ENCODE measurements at regions of chr6 and their contacts with region 1.

Region 1: DNA sequence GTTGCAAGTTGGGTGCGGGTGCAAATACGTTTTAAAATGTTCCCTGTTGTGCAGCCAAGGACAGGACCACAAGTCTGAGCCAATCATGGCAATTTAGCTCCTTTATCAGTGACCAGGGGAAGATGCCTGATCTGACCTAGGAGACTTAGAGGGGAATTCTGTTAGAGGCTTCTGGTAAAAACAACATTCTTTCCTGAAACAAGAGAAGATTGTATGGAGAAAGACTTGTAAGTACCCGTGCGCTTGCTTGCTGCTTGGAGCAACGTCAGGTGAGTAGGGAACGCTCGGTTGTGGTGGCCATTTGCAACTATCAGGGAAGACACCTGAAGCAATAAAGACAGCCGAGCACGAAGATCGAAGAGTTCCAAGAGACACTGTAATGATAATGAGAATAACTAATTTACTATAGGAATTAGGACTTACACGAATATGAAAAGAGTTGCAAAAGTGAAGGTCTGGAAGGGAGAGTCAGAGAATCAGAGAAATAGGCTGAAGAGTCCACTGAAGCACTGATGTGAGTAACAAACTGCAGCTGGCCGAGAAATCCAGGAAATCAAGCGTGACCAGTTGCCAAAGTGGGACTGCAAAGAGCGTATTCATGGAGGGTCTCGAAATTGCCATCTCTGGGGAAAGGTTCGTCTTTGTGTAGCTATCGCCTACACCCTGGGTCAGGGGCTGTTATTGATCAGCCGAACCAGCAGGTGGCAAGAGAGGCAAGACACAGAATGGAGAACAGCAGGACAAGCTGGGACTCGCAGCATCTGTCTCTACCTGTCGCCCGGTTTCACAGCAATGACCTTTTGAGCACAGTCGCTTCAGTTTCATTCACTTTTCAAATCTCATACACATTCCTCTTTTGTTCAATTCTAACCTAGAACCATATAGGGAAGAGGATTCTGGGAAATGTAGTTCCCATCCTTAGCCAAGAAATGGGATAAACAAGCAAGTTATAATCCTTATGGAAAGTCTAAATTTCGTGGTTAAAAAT is 26.1 kb downstream of the LOC128125822 start:
- DNase-seq: peak; percentile 84
- ATAC-seq: peak; percentile 100
- H3K4me3 Mint-ChIP-seq: peak overlapping the region; percentile 73
- H3K27ac Mint-ChIP-seq: peak overlapping the region; percentile 2
- H3K4me1 Mint-ChIP-seq: peaks cover 16% of the 10 kb centered on the region
- H3K27me3 Mint-ChIP-seq: peaks cover 6% of the 10 kb centered on the region

Region 2: DNA sequence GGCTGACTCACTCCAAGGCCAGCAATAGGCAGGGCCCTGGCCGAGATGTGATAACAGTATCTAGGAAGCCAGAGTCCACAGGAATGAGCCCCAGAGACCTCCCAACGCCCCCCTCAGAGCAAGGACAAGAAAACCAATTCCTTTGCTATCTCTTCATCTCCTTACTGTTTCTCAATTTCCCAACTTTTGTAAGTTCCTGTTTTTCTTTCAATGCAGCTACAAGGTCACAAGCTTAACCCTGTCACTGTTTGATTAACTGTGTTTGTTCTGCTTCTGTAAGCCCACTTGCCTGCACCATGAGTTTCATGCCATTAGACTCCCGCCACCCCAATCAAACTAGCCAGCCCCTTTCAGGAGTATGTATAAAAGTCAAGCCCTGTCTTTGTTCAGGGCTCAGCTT is 383.5 kb before region 1 on chr6:
- CTCF ChIA-PET with region 1: no interaction called
- POLR2A ChIA-PET with region 1: no interaction called
- intact Hi-C with region 1: no loop called
- DNase-seq: no peak
- ATAC-seq: no peak
- H3K4me3 Mint-ChIP-seq: no peak overlapping the region
- H3K27ac Mint-ChIP-seq: no peak overlapping the region
- H3K4me1 Mint-ChIP-seq: no peaks in the 10 kb centered on the region
- H3K27me3 Mint-ChIP-seq: no peaks in the 10 kb centered on the region

Region 3: GRCh38 chr6:63352587-63353285 is 245.6 kb before region 1 on chr6:
- CTCF ChIA-PET with region 1: no interaction called
- POLR2A ChIA-PET with region 1: no interaction called
- intact Hi-C with region 1: loop called in 1 of 2 experiments (anchors 1 kb)
- DNase-seq: no peak
- ATAC-seq: no peak
- H3K4me3 Mint-ChIP-seq: no peak overlapping the region
- H3K27ac Mint-ChIP-seq: no peak overlapping the region
- H3K4me1 Mint-ChIP-seq: peaks cover 6% of the 10 kb centered on the region
- H3K27me3 Mint-ChIP-seq: peaks cover 13% of the 10 kb centered on the region

Region 4: DNA sequence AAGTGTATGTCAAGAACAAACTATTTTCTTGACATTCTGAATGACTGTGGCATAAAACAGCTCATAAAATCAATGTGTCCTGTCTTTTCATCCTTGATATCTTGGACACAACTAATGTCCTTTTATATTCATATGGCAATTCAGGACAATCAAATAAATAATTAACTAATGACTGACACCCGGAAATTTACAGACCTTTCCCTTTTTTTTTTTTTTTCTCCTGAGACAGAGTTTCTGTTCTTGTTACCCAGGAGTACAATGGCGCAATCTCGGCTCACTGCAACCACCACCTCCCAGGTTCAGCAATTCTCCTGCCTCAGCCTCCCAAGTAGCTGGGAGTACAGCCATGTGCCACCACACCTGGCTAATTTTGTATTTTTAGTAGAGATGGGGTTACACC is 171.5 kb before region 1 on chr6:
- CTCF ChIA-PET with region 1: no interaction called
- POLR2A ChIA-PET with region 1: no interaction called
- intact Hi-C with region 1: no loop called
- DNase-seq: no peak
- ATAC-seq: no peak
- H3K4me3 Mint-ChIP-seq: no peak overlapping the region
- H3K27ac Mint-ChIP-seq: no peak overlapping the region
- H3K4me1 Mint-ChIP-seq: no peaks in the 10 kb centered on the region
- H3K27me3 Mint-ChIP-seq: peaks cover 7% of the 10 kb centered on the region

Region 5: GRCh38 chr6:63635588-63636517 is 37.5 kb after region 1 on chr6 and contains the start of gene PHF3:
- CTCF ChIA-PET with region 1: interaction called, 25 read pairs
- POLR2A ChIA-PET with region 1: no interaction called
- intact Hi-C with region 1: loop called in 1 of 2 experiments (anchors 1 kb)
- DNase-seq: peak; percentile 95
- ATAC-seq: peak; percentile 94
- H3K4me3 Mint-ChIP-seq: peak within 1 kb of the TSS; percentile 99
- H3K27ac Mint-ChIP-seq: peak within 1 kb of the TSS; percentile 99
- H3K4me1 Mint-ChIP-seq: peaks cover 37% of the 10 kb centered on the region
- H3K27me3 Mint-ChIP-seq: no peaks in the 10 kb centered on the region
- total RNA-seq, gene PHF3: 50.5 to 56.5 TPM

Region 6: DNA sequence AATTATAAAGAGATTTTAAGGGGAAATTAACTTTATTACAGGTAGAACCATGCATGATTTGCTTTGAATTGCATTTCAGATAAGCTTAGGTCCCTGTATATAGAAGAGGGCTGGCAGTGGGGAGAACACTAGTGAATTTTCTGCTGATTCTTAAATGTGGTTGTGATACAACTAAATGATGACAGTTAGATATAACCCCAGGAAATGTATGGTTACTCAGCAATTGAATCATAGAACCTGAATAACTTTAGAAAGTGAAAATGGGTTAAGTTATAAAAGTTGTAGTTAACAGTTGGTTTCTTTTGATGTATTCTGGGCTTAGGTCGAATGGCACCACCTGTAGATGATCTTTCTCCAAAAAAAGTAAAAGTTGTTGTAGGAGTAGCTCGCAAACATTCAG is 107.4 kb after region 1 on chr6:
- CTCF ChIA-PET with region 1: interaction called, 3 read pairs
- POLR2A ChIA-PET with region 1: no interaction called
- intact Hi-C with region 1: loop called in 1 of 2 experiments (anchors 2 kb)
- DNase-seq: no peak
- ATAC-seq: peak; percentile 73
- H3K4me3 Mint-ChIP-seq: no peak overlapping the region
- H3K27ac Mint-ChIP-seq: peak overlapping the region; percentile 62
- H3K4me1 Mint-ChIP-seq: peaks cover 16% of the 10 kb centered on the region
- H3K27me3 Mint-ChIP-seq: no peaks in the 10 kb centered on the region

Region 7: GRCh38 chr6:63764318-63764916 is 166.1 kb after region 1 on chr6:
- CTCF ChIA-PET with region 1: interaction called, 127 read pairs
- POLR2A ChIA-PET with region 1: no interaction called
- intact Hi-C with region 1: loop called (anchors 1 kb)
- DNase-seq: no peak
- ATAC-seq: no peak
- H3K4me3 Mint-ChIP-seq: no peak overlapping the region
- H3K27ac Mint-ChIP-seq: no peak overlapping the region
- H3K4me1 Mint-ChIP-seq: no peaks in the 10 kb centered on the region
- H3K27me3 Mint-ChIP-seq: peaks cover 5% of the 10 kb centered on the region

Measured in activated CD4-positive, alpha-beta T cell treated with anti-CD3 and anti-CD28 coated beads for 36 hours (primary cell).